ENCODE measurements at regions of chr10 and their contacts with region 1.

Region 1: DNA sequence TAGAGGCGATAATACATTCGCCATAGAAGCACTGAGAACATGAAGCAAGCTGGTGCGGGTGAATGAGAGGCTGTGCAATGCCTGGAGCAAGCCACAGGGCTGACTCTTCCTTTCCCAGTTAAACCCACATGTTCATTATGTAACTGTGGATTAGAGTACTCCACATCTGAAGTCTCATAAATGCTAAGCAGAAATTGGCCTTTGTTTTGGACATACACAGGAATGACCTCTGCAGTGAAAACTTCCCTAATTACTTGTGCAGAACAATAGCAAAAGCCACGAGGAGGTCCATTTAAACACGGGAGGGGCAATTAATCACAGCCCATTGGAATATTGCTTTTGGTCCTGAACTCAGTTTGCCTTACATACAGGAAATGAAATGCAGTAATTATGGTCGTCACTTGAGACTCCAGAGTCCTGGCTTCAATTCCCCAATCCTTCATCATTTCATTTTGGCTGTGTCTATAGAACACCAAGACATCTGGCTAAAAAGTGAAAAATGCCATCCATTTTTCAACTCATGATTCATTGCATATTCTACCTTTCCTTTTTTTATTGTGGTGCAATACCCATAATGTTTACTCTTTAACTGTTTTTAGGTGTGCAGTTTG is 78.7 kb upstream of the CXCL12 start:
- DNase-seq: peak; percentile 41
- H3K4me3 Mint-ChIP-seq: no peak overlapping the region
- H3K27ac Mint-ChIP-seq: no peak overlapping the region
- H3K4me1 Mint-ChIP-seq: peaks cover 27% of the 10 kb centered on the region
- H3K27me3 Mint-ChIP-seq: no peaks in the 10 kb centered on the region
- CTCF ChIP-seq: no peak

Region 2: GRCh38 chr10:44607116-44607515 is 143.5 kb after region 1 on chr10:
- CTCF ChIA-PET with region 1: no interaction called
- POLR2A ChIA-PET with region 1: no interaction called
- intact Hi-C with region 1: no loop called
- DNase-seq: no peak
- H3K4me3 Mint-ChIP-seq: no peak overlapping the region
- H3K27ac Mint-ChIP-seq: no peak overlapping the region
- H3K4me1 Mint-ChIP-seq: no peaks in the 10 kb centered on the region
- H3K27me3 Mint-ChIP-seq: no peaks in the 10 kb centered on the region
- CTCF ChIP-seq: no peak

Region 3: GRCh38 chr10:44801383-44802327 is 338.0 kb after region 1 on chr10:
- CTCF ChIA-PET with region 1: no interaction called
- POLR2A ChIA-PET with region 1: no interaction called
- intact Hi-C with region 1: loop called (anchors 10 kb)
- DNase-seq: peak; percentile 93
- H3K4me3 Mint-ChIP-seq: no peak overlapping the region
- H3K27ac Mint-ChIP-seq: peak overlapping the region; percentile 73
- H3K4me1 Mint-ChIP-seq: peaks cover 18% of the 10 kb centered on the region
- H3K27me3 Mint-ChIP-seq: peaks cover 23% of the 10 kb centered on the region
- CTCF ChIP-seq: no peak

Region 4: GRCh38 chr10:44857363-44858016 is 393.9 kb after region 1 on chr10:
- CTCF ChIA-PET with region 1: no interaction called
- POLR2A ChIA-PET with region 1: no interaction called
- intact Hi-C with region 1: loop called (anchors 10 kb)
- DNase-seq: peak; percentile 69
- H3K4me3 Mint-ChIP-seq: no peak overlapping the region
- H3K27ac Mint-ChIP-seq: no peak overlapping the region
- H3K4me1 Mint-ChIP-seq: no peaks in the 10 kb centered on the region
- H3K27me3 Mint-ChIP-seq: no peaks in the 10 kb centered on the region
- CTCF ChIP-seq: peak; percentile 96